ENCODE measurements at regions of chr15 and their contacts with region 1.

Region 1: GRCh38 chr15:31215490-31216214 is 111.0 kb upstream of the KLF13 start:
- DNase-seq: peak; percentile 90
- ATAC-seq: peak; percentile 82
- H3K4me3 ChIP-seq: peak overlapping the region in 4 of 5 experiments; percentile 35 to 72 (median 66)
- H3K4me3 Mint-ChIP-seq: peak overlapping the region; percentile 87
- H3K27ac ChIP-seq: peak overlapping the region; percentile 66 to 79
- H3K27ac Mint-ChIP-seq: peak overlapping the region; percentile 87
- H3K4me1 ChIP-seq: peaks cover 14 to 25% of the 10 kb centered on the region in 2 donors
- H3K4me1 Mint-ChIP-seq: peaks cover 23% of the 10 kb centered on the region
- H3K27me3 ChIP-seq: no peaks in the 10 kb centered on the region
- H3K27me3 Mint-ChIP-seq: no peaks in the 10 kb centered on the region
- CTCF ChIP-seq: peak; percentile 96

Region 2: DNA sequence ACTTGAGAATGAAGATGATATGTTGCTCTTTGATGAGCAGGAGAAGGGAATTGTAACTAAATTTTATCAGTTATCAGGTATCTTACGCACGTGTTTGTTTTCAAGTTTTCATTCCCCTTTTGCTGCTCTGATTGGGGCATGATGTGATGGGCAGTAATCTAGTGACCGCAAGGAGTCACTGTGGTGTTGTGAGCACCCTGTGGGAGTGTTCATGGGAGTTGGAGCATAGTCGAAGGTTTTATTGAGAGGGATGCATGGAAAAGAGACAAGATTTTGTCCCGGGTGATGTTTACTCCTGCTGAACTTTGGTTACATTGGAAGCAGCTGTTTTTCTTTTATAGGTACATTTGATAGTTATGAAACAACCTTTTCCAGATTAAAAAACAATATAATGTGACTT is 309.8 kb before region 1 on chr15:
- CTCF ChIA-PET with region 1: no interaction called
- POLR2A ChIA-PET with region 1: no interaction called
- intact Hi-C with region 1: no loop called
- DNase-seq: no peak
- ATAC-seq: no peak
- H3K4me3 ChIP-seq: no peak overlapping the region
- H3K4me3 Mint-ChIP-seq: no peak overlapping the region
- H3K27ac ChIP-seq: no peak overlapping the region
- H3K27ac Mint-ChIP-seq: no peak overlapping the region
- H3K4me1 ChIP-seq: peaks cover 0 to 6% of the 10 kb centered on the region in 2 donors
- H3K4me1 Mint-ChIP-seq: peaks cover 29% of the 10 kb centered on the region
- H3K27me3 ChIP-seq: no peaks in the 10 kb centered on the region
- H3K27me3 Mint-ChIP-seq: no peaks in the 10 kb centered on the region
- CTCF ChIP-seq: no peak

Region 3: DNA sequence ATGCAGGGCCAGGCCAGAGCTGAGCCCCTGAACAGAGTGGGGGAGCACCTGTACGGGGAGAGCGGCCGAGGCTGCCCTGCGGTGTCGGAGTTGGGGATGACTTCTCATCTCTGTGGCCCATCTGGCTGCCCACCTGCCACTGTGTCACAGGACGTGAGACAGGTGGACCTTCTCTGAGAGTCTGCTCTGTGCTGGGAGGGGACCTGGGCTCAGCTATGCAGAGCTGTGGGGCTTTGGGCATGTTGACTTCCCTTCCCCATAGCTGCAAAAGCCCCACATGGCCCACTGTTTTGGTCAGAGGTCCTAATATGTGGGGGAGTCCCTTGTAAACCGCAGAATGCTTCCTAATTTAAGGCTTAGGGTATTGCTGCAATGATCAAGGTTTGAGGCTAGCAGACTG is 46.1 kb before region 1 on chr15:
- CTCF ChIA-PET with region 1: no interaction called
- POLR2A ChIA-PET with region 1: no interaction called
- intact Hi-C with region 1: no loop called
- DNase-seq: no peak
- ATAC-seq: no peak
- H3K4me3 ChIP-seq: no peak overlapping the region
- H3K4me3 Mint-ChIP-seq: no peak overlapping the region
- H3K27ac ChIP-seq: no peak overlapping the region
- H3K27ac Mint-ChIP-seq: no peak overlapping the region
- H3K4me1 ChIP-seq: peaks cover 2 to 4% of the 10 kb centered on the region in 2 donors
- H3K4me1 Mint-ChIP-seq: no peaks in the 10 kb centered on the region
- H3K27me3 ChIP-seq: no peaks in the 10 kb centered on the region
- H3K27me3 Mint-ChIP-seq: peaks cover 13% of the 10 kb centered on the region
- CTCF ChIP-seq: no peak

Region 4: GRCh38 chr15:31200735-31201151 is 14.9 kb before region 1 on chr15:
- CTCF ChIA-PET with region 1: interaction called, 11 read pairs
- POLR2A ChIA-PET with region 1: interaction called, 3 read pairs
- intact Hi-C with region 1: no loop called
- DNase-seq: peak; percentile 63
- ATAC-seq: peak; percentile 69
- H3K4me3 ChIP-seq: no peak overlapping the region
- H3K4me3 Mint-ChIP-seq: no peak overlapping the region
- H3K27ac ChIP-seq: no peak overlapping the region
- H3K27ac Mint-ChIP-seq: no peak overlapping the region
- H3K4me1 ChIP-seq: peaks cover 0 to 4% of the 10 kb centered on the region in 2 donors
- H3K4me1 Mint-ChIP-seq: peaks cover 8% of the 10 kb centered on the region
- H3K27me3 ChIP-seq: peaks cover 0 to 4% (median 2%) of the 10 kb centered on the region in 4 experiments
- H3K27me3 Mint-ChIP-seq: peaks cover 5% of the 10 kb centered on the region
- CTCF ChIP-seq: peak; percentile 26

Region 5: GRCh38 chr15:31228985-31229826 is 13.6 kb after region 1 on chr15:
- CTCF ChIA-PET with region 1: interaction called, 20 read pairs
- POLR2A ChIA-PET with region 1: interaction called, 6 read pairs
- intact Hi-C with region 1: loop called (anchors 1 kb)
- DNase-seq: peak; percentile 68
- ATAC-seq: peak; percentile 46
- H3K4me3 ChIP-seq: peak overlapping the region; percentile 19 to 63 (median 43)
- H3K4me3 Mint-ChIP-seq: peak overlapping the region; percentile 89
- H3K27ac ChIP-seq: peak overlapping the region; percentile 11 to 68
- H3K27ac Mint-ChIP-seq: peak overlapping the region; percentile 92
- H3K4me1 ChIP-seq: peaks cover 72 to 86% of the 10 kb centered on the region in 2 donors
- H3K4me1 Mint-ChIP-seq: peaks cover 86% of the 10 kb centered on the region
- H3K27me3 ChIP-seq: no peaks in the 10 kb centered on the region
- H3K27me3 Mint-ChIP-seq: no peaks in the 10 kb centered on the region
- CTCF ChIP-seq: no peak

Region 6: GRCh38 chr15:31302778-31303725 is 87.4 kb after region 1 on chr15:
- CTCF ChIA-PET with region 1: interaction called, 17 read pairs
- POLR2A ChIA-PET with region 1: interaction called, 6 read pairs
- intact Hi-C with region 1: no loop called
- DNase-seq: peak; percentile 35
- ATAC-seq: peak; percentile 43
- H3K4me3 ChIP-seq: no peak overlapping the region
- H3K4me3 Mint-ChIP-seq: no peak overlapping the region
- H3K27ac ChIP-seq: no peak overlapping the region
- H3K27ac Mint-ChIP-seq: peak overlapping the region; percentile 26
- H3K4me1 ChIP-seq: peaks cover 30 to 53% of the 10 kb centered on the region in 2 donors
- H3K4me1 Mint-ChIP-seq: peaks cover 50% of the 10 kb centered on the region
- H3K27me3 ChIP-seq: no peaks in the 10 kb centered on the region
- H3K27me3 Mint-ChIP-seq: no peaks in the 10 kb centered on the region
- CTCF ChIP-seq: peak; percentile 12

Region 7: DNA sequence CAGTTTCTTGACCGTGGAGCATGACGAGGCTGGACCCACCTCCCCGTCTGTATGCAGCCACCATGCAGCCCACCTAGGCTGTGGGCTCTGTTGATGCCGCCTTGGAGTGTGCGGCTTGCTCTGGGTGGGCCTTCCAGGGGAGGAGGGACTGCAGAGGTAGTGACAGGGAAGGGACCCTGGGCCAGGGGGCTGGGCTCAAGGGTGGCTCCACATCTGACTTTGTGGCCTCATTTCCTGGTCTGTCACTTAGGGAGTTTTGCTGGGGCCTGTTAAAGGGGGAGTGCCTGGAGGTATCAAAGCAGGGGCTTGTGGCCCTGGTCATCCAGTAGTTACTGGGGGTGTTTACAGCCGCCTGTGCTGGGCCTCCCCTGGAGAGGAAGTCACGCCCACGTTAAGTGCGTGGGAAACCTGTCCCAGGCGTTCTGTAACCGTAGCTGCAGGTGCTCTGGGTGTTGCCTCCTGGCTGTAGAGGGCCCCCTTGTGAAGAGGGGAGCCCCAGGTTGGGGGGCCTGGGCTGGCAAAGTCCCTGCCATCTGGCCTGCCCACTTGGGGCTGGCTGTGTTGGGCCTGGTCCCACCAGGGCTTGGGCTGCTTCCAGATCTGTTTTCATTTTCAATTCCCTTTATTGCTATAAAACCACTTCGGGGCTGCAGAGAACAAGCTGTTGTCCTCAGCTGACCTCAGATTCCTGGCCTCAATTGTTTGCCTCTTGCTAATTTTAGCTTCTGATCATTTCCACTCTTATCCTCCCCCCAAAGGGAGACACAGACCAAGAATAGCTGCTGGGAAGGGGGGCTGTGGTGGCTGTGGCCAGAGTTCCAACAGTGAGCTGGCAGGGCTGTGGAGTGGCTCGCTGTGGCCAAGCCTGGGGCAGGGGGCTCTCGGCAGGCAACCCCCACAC is 137.5 kb after region 1 on chr15:
- CTCF ChIA-PET with region 1: interaction called, 17 read pairs
- POLR2A ChIA-PET with region 1: interaction called, 6 read pairs
- intact Hi-C with region 1: no loop called
- DNase-seq: peak; percentile 87
- ATAC-seq: peak; percentile 82
- H3K4me3 ChIP-seq: peak overlapping the region in 4 of 5 experiments; percentile 10 to 58 (median 34)
- H3K4me3 Mint-ChIP-seq: peak overlapping the region; percentile 88
- H3K27ac ChIP-seq: peak overlapping the region; percentile 96 to 97
- H3K27ac Mint-ChIP-seq: peak overlapping the region; percentile 96
- H3K4me1 ChIP-seq: peaks cover 99 to 100% of the 10 kb centered on the region in 2 donors
- H3K4me1 Mint-ChIP-seq: peaks cover 97% of the 10 kb centered on the region
- H3K27me3 ChIP-seq: no peaks in the 10 kb centered on the region
- H3K27me3 Mint-ChIP-seq: no peaks in the 10 kb centered on the region
- CTCF ChIP-seq: no peak

Region 8: GRCh38 chr15:31440754-31441311 is 225.2 kb after region 1 on chr15:
- CTCF ChIA-PET with region 1: interaction called, 74 read pairs
- POLR2A ChIA-PET with region 1: interaction called, 11 read pairs
- intact Hi-C with region 1: no loop called
- DNase-seq: peak; percentile 46
- ATAC-seq: peak; percentile 37
- H3K4me3 ChIP-seq: peak overlapping the region in 4 of 5 experiments; percentile 50 to 68 (median 64)
- H3K4me3 Mint-ChIP-seq: peak overlapping the region; percentile 71
- H3K27ac ChIP-seq: peak overlapping the region; percentile 15 to 68
- H3K27ac Mint-ChIP-seq: no peak overlapping the region
- H3K4me1 ChIP-seq: peaks cover 33 to 52% of the 10 kb centered on the region in 2 donors
- H3K4me1 Mint-ChIP-seq: peaks cover 59% of the 10 kb centered on the region
- H3K27me3 ChIP-seq: no peaks in the 10 kb centered on the region
- H3K27me3 Mint-ChIP-seq: no peaks in the 10 kb centered on the region
- CTCF ChIP-seq: no peak

Region 9: DNA sequence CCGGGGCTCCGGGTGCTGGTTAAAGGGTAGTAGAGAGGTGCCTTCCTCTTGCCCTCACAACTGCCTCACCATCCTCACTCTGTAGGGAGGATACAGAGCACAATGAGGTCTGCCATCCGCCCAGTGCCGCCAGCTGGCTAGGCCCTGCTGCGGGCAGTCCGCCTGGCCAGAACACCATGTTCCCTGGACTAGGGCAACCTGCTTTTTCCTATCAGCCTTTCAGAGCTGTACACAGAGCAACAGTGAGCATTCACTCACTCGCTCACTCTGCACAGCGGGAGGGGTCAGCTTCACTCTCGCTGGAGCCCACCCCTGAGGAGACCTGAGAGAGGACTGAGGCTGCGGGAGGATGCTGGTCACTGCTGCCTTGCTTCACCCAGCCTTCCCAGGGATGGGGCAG is 596.0 kb after region 1 on chr15:
- CTCF ChIA-PET with region 1: no interaction called
- POLR2A ChIA-PET with region 1: no interaction called
- intact Hi-C with region 1: no loop called
- DNase-seq: no peak
- ATAC-seq: no peak
- H3K4me3 ChIP-seq: no peak overlapping the region
- H3K4me3 Mint-ChIP-seq: no peak overlapping the region
- H3K27ac ChIP-seq: no peak overlapping the region
- H3K27ac Mint-ChIP-seq: no peak overlapping the region
- H3K4me1 ChIP-seq: no peaks in the 10 kb centered on the region
- H3K4me1 Mint-ChIP-seq: no peaks in the 10 kb centered on the region
- H3K27me3 ChIP-seq: no peaks in the 10 kb centered on the region
- H3K27me3 Mint-ChIP-seq: no peaks in the 10 kb centered on the region
- CTCF ChIP-seq: no peak